ENCODE measurements at regions of chr7 and their contacts with region 1.

Region 1: GRCh38 chr7:143240291-143241168 is 18.7 kb downstream of the TAS2R40 start:
- DNase-seq: peak; percentile 61 to 73
- ATAC-seq: peak; percentile 36

Region 2: GRCh38 chr7:143299840-143300239 is 59.3 kb after region 1 on chr7:
- intact Hi-C with region 1: loop called (anchors 5 to 10 kb)
- DNase-seq: peak in 1 of 2 donors; percentile 61
- ATAC-seq: peak; percentile 88

Region 3: DNA sequence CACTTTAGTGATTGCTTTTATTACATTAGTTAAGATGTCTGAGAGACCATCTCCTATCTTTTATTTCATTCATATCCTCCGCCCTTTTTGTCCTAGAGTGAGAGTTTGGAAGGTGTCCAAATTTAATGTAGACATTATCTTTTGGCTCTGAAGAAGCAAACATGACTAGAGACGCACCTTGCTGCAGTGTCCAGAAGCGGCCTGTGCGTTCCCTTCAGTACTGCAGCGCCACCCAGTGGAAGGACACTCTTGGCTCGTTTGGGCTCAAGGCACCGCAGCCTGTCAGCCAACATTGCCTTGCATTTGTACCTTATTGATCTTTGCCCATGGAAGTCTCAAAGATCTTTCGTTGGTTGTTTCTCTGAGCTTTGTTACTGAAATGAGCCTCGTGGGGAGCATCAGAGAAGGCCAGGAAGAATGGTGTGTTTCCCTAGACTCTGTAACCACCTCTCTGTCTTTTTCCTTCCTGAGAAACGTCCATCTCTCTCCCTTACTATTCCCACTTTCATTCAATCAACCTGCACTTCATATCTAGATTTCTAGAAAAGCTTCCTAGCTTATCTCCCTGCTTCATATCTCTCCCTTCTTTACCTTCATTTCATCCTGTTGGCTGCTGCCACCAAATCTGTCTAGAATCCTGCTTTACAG is 65.0 kb after region 1 on chr7:
- intact Hi-C with region 1: loop called (anchors 5 to 10 kb)
- DNase-seq: peak; percentile 78 to 96
- ATAC-seq: peak; percentile 96

Region 4: DNA sequence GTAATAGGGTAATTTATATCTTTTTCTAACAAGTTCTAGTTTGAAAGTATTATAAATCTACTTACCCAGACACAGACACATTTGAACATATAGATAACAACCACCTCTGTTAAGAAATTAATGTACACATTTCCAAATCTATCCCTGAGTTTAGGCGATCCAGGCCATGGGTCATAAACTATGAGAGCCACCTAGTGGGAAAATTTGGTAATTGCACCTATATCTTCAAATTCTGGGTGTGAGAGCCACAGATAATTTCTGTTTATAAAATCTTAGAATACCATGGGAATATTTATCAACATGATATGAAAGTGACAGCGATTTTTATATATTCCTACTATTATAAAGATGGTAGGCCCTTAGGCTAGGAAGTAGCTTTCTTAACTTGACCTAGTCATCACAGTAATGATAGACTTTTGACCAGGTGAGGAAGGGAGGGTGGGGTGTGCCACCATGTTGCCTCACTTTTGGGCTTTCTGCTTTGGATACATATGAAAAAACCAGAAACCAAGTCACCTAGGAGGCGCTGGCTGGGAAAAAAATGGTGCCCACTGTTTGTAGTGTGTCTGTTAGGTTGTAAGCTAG is 176.1 kb after region 1 on chr7:
- intact Hi-C with region 1: loop called in 1 of 2 experiments (anchors 2 kb)
- DNase-seq: no peak
- ATAC-seq: peak; percentile 39

Measured in left colon (tissue), 2 donors.